ENCODE measurements at regions of chr6 and their contacts with region 1.

Region 1: GRCh38 chr6:2558861-2559801 is 191.6 kb downstream of the MYLK4 start:
- DNase-seq: no peak
- H3K4me3 ChIP-seq: no peak overlapping the region
- H3K27ac ChIP-seq: no peak overlapping the region
- H3K4me1 ChIP-seq: no peaks in the 10 kb centered on the region
- H3K27me3 ChIP-seq: no peaks in the 10 kb centered on the region
- CTCF ChIP-seq: no peak

Region 2: GRCh38 chr6:1527073-1527457 is 1032.1 kb before region 1 on chr6:
- CTCF ChIA-PET with region 1: no interaction called
- dilution Hi-C with region 1: no loop called
- in situ Hi-C with region 1: no loop called
- intact Hi-C with region 1: no loop called
- DNase-seq: peak; percentile 32
- H3K4me3 ChIP-seq: no peak overlapping the region
- H3K27ac ChIP-seq: no peak overlapping the region
- H3K4me1 ChIP-seq: peaks cover 12% of the 10 kb centered on the region
- H3K27me3 ChIP-seq: no peaks in the 10 kb centered on the region
- CTCF ChIP-seq: no peak

Region 3: DNA sequence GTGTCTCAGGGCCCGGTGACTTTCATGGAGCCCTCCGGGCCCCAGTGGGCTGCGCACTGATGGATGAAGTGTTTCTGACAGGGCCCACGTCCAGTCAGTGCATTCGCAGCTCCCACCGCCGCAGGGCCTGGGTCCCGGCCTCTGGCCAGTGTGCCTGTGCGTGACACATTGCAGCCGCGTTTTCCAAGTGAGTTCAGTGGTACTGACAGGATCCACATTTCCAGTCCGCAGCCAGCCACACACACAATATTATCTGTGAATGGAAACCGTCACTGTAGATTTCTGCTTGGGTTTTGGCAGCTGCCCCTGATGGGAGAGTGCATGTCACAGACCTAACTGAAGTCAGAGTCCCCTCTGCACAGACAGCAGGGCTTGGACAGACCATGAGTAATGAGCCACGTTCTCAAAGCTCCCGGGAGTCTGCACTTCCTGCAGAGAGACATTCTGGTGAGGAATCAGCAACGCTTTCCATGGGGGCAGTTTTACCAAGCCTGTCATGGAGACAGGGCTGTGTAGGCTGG is 20.2 kb after region 1 on chr6:
- CTCF ChIA-PET with region 1: no interaction called
- dilution Hi-C with region 1: no loop called
- in situ Hi-C with region 1: no loop called
- intact Hi-C with region 1: loop called (anchors 1 kb)
- DNase-seq: no peak
- H3K4me3 ChIP-seq: no peak overlapping the region
- H3K27ac ChIP-seq: no peak overlapping the region
- H3K4me1 ChIP-seq: peaks cover 27% of the 10 kb centered on the region
- H3K27me3 ChIP-seq: no peaks in the 10 kb centered on the region
- CTCF ChIP-seq: no peak

Region 4: GRCh38 chr6:2594868-2595267 is 35.7 kb after region 1 on chr6:
- CTCF ChIA-PET with region 1: no interaction called
- dilution Hi-C with region 1: loop called (anchors 5 kb)
- in situ Hi-C with region 1: no loop called
- intact Hi-C with region 1: no loop called
- DNase-seq: peak; percentile 88
- H3K4me3 ChIP-seq: no peak overlapping the region
- H3K27ac ChIP-seq: peak overlapping the region; percentile 56
- H3K4me1 ChIP-seq: peaks cover 17% of the 10 kb centered on the region
- H3K27me3 ChIP-seq: no peaks in the 10 kb centered on the region
- CTCF ChIP-seq: no peak